Breast epithelium (tissue), 4 donors: ENCODE measurements at regions of chr6 and their contacts with region 1.

Region 1: GRCh38 chr6:160104826-160105517 is 16.6 kb upstream of the SLC22A1 start:
- DNase-seq: no peak
- H3K4me3 ChIP-seq: no peak overlapping the region
- H3K27ac ChIP-seq: no peak overlapping the region
- H3K4me1 ChIP-seq: no peaks in the 10 kb centered on the region
- H3K27me3 ChIP-seq: no peaks in the 10 kb centered on the region
- CTCF ChIP-seq: no peak
- POLR2A ChIP-seq: no peak

Region 2: DNA sequence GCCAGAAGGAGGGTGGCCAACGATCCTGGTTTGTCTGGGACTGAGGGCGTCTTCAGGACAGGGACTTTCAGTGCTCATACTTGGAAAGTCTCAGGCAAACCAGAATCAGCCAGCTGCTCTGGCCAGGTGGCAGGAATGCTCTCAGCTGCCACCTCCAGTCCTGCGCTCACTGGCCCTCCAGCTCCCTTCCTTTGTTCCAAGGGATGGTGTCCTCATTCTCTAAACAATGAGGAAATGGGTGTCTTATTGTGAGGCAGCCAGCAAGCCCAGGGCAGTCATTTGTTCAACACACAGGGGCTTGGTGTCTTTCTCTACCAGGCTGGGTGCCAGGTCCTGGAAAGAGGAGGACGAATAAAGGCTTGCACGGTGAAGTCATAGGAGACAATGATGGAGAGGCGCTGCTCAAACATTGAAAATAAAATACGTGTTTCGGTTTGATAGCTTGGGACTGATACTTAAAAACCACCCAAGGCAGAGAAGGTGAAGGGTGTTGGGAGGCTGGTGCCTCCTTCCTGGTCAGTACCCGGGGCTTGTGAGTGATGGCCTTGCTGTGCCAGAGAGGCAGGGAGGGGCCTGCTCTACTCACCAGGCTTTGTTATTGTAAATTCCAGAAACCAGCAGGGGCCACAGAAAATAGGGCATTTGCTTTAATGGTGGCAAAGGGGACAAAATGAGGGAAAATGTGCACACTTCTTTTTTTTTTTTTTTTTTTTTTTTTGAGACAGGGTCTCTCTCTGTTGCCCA is 1556.4 kb before region 1 on chr6:
- intact Hi-C with region 1: loop called (anchors 5 kb)
- DNase-seq: peak; percentile 75 to 80
- H3K4me3 ChIP-seq: no peak overlapping the region
- H3K27ac ChIP-seq: peak overlapping the region; percentile 34 to 68
- H3K4me1 ChIP-seq: no peaks in the 10 kb centered on the region
- H3K27me3 ChIP-seq: no peaks in the 10 kb centered on the region
- CTCF ChIP-seq: no peak
- POLR2A ChIP-seq: no peak

Region 3: GRCh38 chr6:159929819-159930218 is 175.2 kb before region 1 on chr6:
- intact Hi-C with region 1: no loop called
- DNase-seq: no peak
- H3K4me3 ChIP-seq: no peak overlapping the region
- H3K27ac ChIP-seq: no peak overlapping the region
- H3K4me1 ChIP-seq: no peaks in the 10 kb centered on the region
- H3K27me3 ChIP-seq: no peaks in the 10 kb centered on the region
- CTCF ChIP-seq: no peak
- POLR2A ChIP-seq: no peak